Activated CD4-positive, alpha-beta memory T cell treated with anti-CD3 and anti-CD28 coated beads, Interleukin-2, amount 10 ng/mL, durations not matched to agents 7 days and 5 days (primary cell): ENCODE measurements at regions of chr2 and their contacts with region 1.

Region 1: GRCh38 chr2:232438951-232439757 is 16.8 kb upstream of the ALPI start:
- DNase-seq: peak; percentile 47
- H3K4me3 Mint-ChIP-seq: no peak overlapping the region
- H3K27ac Mint-ChIP-seq: no peak overlapping the region
- H3K4me1 Mint-ChIP-seq: no peaks in the 10 kb centered on the region
- H3K27me3 Mint-ChIP-seq: peaks cover 2% of the 10 kb centered on the region

Region 2: GRCh38 chr2:232336241-232337025 is 102.7 kb before region 1 on chr2:
- CTCF ChIA-PET with region 1: interaction called, 13 read pairs
- POLR2A ChIA-PET with region 1: no interaction called
- DNase-seq: no peak
- H3K4me3 Mint-ChIP-seq: no peak overlapping the region
- H3K27ac Mint-ChIP-seq: no peak overlapping the region
- H3K4me1 Mint-ChIP-seq: no peaks in the 10 kb centered on the region
- H3K27me3 Mint-ChIP-seq: no peaks in the 10 kb centered on the region